ENCODE measurements at regions of chr4 and their contacts with region 1.

Region 1: DNA sequence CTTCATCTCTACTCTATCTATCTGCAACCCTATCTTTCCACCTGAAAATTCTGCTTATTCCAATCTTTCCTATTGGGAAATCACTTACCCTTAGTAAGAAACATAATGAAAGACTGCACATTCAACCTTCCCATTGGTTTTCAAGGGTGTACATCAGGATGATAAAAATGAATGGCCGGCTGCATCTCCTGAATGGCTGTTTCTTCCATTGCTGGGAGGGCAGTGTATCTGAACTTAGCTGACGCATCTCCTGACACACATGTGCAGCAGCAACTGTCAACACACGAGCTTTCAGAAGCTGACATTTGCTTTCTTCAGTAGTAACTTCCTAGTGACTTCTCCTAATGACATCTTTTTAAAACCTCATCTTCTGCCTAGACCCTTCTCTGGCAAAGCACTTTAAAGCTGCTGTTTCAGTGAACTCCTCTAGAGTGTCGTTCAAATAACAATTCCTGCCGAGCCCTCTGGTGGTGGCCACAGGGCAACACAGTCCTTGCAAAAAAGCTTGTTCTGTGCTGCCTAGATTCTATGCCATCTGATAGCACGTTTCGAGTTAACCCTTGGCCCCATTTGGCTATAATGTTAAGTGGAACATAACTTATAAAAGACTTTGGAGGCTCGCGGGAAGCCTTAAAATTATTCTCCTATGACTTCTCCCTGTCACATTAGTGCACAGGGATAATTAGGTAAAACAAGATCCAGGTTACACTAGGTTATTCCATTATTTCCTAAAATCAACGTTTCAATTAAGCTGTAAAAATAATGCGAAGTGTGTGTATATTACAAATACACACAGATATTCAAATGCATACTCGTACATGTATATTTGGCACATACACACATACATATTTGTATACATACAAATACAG is 2340.7 kb downstream of the PCDH7 start:
- DNase-seq: peak; percentile 34
- H3K4me3 ChIP-seq: no peak overlapping the region
- H3K27ac ChIP-seq: no peak overlapping the region
- H3K4me1 ChIP-seq: no peaks in the 10 kb centered on the region
- H3K27me3 ChIP-seq: no peaks in the 10 kb centered on the region
- CTCF ChIP-seq: peak; percentile 71

Region 2: DNA sequence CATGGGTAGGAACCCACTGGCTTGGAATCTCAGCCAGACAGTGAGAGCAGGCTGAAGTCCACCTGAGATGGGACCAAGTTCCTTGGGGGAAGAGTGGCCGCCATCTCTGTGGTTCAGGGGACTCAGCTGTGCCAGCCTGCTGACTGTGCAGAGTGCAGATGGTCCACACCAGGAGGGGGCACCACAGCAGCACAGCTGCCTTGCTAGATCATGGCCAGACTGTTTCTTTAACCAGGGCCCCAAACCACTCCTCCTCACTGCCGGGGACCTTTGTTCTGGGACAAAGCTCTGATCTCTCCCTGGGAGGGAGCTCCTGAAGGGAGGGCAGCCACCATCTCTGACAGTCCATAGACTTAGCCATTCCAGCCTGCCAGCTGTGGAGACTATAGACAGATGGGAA is 151.2 kb before region 1 on chr4:
- intact Hi-C with region 1: loop called (anchors 5 kb)
- DNase-seq: no peak
- H3K4me3 ChIP-seq: no peak overlapping the region
- H3K27ac ChIP-seq: no peak overlapping the region
- H3K4me1 ChIP-seq: no peaks in the 10 kb centered on the region
- H3K27me3 ChIP-seq: no peaks in the 10 kb centered on the region
- CTCF ChIP-seq: no peak